PC-9 (cell line): ENCODE measurements at regions of chr5 and their contacts with region 1.

Region 1: DNA sequence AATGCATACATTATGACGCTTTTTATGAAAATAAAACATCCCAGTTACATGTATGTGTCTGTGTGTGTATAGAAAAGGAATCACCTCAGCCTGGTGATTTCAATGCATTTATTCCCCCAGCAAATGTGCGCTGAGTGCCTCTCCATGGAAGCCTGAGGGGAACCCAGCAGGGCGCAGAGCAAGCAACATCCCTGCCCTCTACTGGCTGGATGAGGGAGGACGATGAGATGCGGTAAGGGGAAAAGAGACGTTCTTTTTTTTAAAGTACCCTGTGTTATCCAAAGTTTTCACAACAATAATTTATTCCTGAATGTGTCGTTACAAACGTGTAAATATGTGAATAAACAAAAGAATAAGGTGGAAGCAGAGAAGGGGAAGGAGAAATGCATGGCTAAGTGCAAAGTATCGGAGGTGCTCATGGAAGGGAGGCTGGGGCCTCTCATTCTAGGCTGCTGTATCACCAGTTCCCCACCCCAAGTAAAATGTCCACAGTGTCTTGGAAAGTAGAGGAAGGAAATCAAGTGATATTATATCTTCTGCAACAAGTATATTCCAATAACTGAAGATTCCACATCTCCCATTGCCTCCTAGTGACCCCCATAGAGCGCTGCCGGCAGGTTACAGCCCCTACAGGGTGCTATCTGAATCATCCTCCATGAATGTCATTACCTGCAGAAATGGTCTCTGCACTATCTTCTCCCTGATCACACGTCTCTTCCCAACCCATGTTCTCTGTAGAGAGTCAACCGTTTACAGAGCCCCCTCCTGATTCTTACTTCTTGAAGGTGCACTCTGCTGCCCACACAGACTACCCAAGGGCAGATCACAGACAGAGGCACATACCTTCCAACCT is 13.0 kb upstream of the ABLIM3 start:
- DNase-seq: peak in 1 of 2 experiments; percentile 64
- H3K4me3 ChIP-seq: peak overlapping the region; percentile 32; the same call in 1 of the 2 replicates
- H3K27ac ChIP-seq: peak overlapping the region; percentile 94
- H3K4me1 ChIP-seq: peaks cover 86% of the 10 kb centered on the region
- H3K27me3 ChIP-seq: no peaks in the 10 kb centered on the region
- CTCF ChIP-seq: peak; percentile 83

Region 2: DNA sequence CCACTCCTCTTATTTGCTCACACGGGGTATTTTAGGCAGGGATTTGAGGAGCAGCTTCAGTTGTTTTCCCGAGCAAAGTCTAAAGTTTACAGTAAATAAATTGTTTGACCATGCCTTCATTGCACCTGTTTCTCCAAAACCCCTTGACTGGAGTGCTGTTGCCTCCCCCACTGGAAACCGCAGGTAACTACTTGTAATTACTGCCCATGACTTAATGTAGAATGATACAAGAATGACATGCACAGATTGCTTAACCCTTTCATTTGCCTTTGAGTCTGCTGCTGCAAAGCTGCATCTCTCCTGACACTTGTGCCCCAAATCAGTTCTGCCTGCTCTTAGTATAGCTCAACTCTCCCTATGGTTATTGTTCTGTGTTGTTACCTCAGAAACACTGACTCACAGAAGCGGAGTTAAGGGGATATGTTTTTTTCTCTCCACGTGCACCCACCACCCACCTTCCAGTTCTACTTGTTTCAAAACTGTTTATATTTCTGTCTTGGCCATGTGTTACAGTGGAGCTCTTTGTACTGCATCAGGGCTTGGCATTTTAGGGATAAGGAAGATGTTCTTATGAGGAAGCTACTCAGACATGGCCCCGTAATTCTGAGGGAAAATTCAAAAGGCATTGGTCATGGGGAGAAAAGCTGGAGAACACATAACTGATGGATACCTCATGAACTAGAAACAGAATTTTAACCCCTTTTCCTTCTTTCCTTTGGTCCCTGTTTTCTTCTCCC is 299.6 kb before region 1 on chr5:
- CTCF ChIA-PET with region 1: no interaction called
- POLR2A ChIA-PET with region 1: no interaction called
- intact Hi-C with region 1: no loop called
- DNase-seq: peak in 1 of 2 experiments; percentile 68
- H3K4me3 ChIP-seq: peak overlapping the region; percentile 63
- H3K27ac ChIP-seq: peak overlapping the region; percentile 67
- H3K4me1 ChIP-seq: peaks cover 44% of the 10 kb centered on the region
- H3K27me3 ChIP-seq: no peaks in the 10 kb centered on the region
- CTCF ChIP-seq: peak; percentile 53

Region 3: GRCh38 chr5:148912714-148913398 is 215.4 kb before region 1 on chr5:
- CTCF ChIA-PET with region 1: no interaction called
- POLR2A ChIA-PET with region 1: interaction called, 4 read pairs
- intact Hi-C with region 1: loop called (anchors 5 kb)
- DNase-seq: peak; percentile 87 to 95
- H3K4me3 ChIP-seq: no peak overlapping the region
- H3K27ac ChIP-seq: peak overlapping the region; percentile 98
- H3K4me1 ChIP-seq: peaks cover 89% of the 10 kb centered on the region
- H3K27me3 ChIP-seq: no peaks in the 10 kb centered on the region
- CTCF ChIP-seq: peak; percentile 69

Region 4: GRCh38 chr5:148998174-148998797 is 130.0 kb before region 1 on chr5:
- CTCF ChIA-PET with region 1: interaction called, 3 read pairs
- POLR2A ChIA-PET with region 1: no interaction called
- intact Hi-C with region 1: loop called (anchors 2 kb)
- DNase-seq: peak; percentile 46 to 54
- H3K4me3 ChIP-seq: no peak overlapping the region
- H3K27ac ChIP-seq: no peak overlapping the region
- H3K4me1 ChIP-seq: peaks cover 46% of the 10 kb centered on the region
- H3K27me3 ChIP-seq: no peaks in the 10 kb centered on the region
- CTCF ChIP-seq: peak; percentile 85

Region 5: DNA sequence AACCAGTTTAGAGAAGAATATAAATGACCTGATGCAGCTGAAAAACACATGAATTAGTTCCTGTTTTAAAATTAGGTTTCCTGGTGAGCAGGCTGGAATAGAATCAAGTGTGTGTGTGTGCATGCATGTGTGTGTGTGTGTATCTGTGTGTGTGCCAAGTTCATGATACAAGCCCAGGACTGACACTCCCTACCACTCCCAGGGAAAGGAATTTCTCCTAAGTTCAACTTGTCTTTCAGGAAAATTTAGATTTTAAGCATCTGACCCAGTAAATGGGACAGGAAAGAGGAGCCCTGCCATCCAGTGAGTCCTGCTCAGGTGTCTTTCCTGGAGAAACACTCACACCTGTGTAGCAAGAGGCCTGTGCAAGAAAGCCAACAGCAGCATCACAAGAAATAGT is 54.1 kb before region 1 on chr5:
- CTCF ChIA-PET with region 1: no interaction called
- POLR2A ChIA-PET with region 1: no interaction called
- intact Hi-C with region 1: loop called (anchors 2 kb)
- DNase-seq: peak; percentile 57 to 76
- H3K4me3 ChIP-seq: no peak overlapping the region
- H3K27ac ChIP-seq: peak overlapping the region; percentile 79
- H3K4me1 ChIP-seq: peaks cover 47% of the 10 kb centered on the region
- H3K27me3 ChIP-seq: no peaks in the 10 kb centered on the region
- CTCF ChIP-seq: no peak

Region 6: DNA sequence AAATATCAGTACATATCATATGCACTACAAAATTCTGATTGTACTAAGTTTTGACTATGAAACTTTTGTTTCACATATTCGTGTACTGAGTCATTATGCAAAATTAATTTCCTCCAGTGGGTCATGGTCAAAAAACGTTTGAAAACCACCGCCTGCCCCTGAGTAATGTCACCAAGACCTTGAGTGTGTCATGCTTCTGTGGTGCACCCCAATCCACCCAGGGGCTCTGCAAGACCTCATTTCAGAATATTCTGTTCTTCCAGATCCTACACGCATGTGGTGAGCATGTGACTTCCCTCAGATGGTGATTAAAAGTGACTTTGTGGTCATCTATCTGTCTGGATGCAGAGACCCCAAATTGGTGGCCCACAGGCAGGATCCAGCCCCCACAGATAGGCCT is 44.0 kb after region 1 on chr5:
- CTCF ChIA-PET with region 1: no interaction called
- POLR2A ChIA-PET with region 1: no interaction called
- intact Hi-C with region 1: loop called (anchors 2 kb)
- DNase-seq: peak; percentile 50 to 61
- H3K4me3 ChIP-seq: no peak overlapping the region
- H3K27ac ChIP-seq: no peak overlapping the region
- H3K4me1 ChIP-seq: peaks cover 17% of the 10 kb centered on the region
- H3K27me3 ChIP-seq: no peaks in the 10 kb centered on the region
- CTCF ChIP-seq: no peak

Region 7: GRCh38 chr5:149228618-149229297 is 100.5 kb after region 1 on chr5:
- CTCF ChIA-PET with region 1: interaction called, 5 read pairs
- POLR2A ChIA-PET with region 1: interaction called, 7 read pairs
- intact Hi-C with region 1: loop called (anchors 1 kb)
- DNase-seq: peak; percentile 40 to 53
- H3K4me3 ChIP-seq: no peak overlapping the region
- H3K27ac ChIP-seq: no peak overlapping the region
- H3K4me1 ChIP-seq: peaks cover 18% of the 10 kb centered on the region
- H3K27me3 ChIP-seq: no peaks in the 10 kb centered on the region
- CTCF ChIP-seq: peak; percentile 68

Region 8: DNA sequence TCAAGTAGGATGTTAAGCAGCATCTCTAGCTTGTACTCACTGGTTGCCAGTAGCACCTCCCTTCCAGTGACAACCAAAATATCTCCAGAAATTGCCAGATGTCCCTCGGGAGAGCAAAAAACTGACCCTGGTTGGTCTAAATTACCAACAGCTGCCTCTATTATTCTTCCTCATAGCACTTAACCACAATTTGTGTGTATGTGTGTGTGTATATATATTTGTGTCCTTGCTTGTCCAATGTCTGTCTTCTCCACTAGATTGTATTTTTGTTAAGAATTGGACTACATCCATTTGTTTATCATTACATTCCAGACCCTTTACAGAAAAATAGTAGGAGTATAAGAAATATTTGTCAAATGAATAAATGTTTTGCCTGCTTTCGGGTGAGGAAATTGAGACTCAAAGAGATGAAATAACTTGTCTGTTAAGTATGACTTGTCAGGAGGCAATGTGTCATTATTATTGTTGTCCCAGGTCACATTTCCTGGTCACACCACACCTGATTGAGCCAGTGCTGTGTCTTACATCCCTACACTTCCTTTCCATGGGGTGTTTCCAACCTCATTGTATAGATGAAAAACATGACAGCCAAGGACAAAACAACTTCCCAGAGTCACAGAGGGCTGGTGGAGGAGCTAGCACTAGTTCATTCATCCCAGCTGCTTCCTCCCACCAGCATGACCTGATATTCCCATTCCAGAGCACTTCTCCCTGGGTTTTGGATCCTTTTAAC is 205.6 kb after region 1 on chr5:
- CTCF ChIA-PET with region 1: no interaction called
- POLR2A ChIA-PET with region 1: no interaction called
- intact Hi-C with region 1: no loop called
- DNase-seq: peak in 1 of 2 experiments; percentile 47
- H3K4me3 ChIP-seq: no peak overlapping the region
- H3K27ac ChIP-seq: peak overlapping the region; percentile 45
- H3K4me1 ChIP-seq: peaks cover 19% of the 10 kb centered on the region
- H3K27me3 ChIP-seq: no peaks in the 10 kb centered on the region
- CTCF ChIP-seq: no peak

Region 9: GRCh38 chr5:149561848-149562247 is 433.6 kb after region 1 on chr5:
- CTCF ChIA-PET with region 1: no interaction called
- POLR2A ChIA-PET with region 1: no interaction called
- intact Hi-C with region 1: loop called (anchors 5 kb)
- DNase-seq: peak; percentile 48 to 95
- H3K4me3 ChIP-seq: peak overlapping the region; percentile 43; the same call in 1 of the 2 replicates
- H3K27ac ChIP-seq: peak overlapping the region; percentile 97
- H3K4me1 ChIP-seq: peaks cover 53% of the 10 kb centered on the region
- H3K27me3 ChIP-seq: no peaks in the 10 kb centered on the region
- CTCF ChIP-seq: no peak